GM10248 (cell line): ENCODE measurements at regions of chr19 and their contacts with region 1.

Region 1: DNA sequence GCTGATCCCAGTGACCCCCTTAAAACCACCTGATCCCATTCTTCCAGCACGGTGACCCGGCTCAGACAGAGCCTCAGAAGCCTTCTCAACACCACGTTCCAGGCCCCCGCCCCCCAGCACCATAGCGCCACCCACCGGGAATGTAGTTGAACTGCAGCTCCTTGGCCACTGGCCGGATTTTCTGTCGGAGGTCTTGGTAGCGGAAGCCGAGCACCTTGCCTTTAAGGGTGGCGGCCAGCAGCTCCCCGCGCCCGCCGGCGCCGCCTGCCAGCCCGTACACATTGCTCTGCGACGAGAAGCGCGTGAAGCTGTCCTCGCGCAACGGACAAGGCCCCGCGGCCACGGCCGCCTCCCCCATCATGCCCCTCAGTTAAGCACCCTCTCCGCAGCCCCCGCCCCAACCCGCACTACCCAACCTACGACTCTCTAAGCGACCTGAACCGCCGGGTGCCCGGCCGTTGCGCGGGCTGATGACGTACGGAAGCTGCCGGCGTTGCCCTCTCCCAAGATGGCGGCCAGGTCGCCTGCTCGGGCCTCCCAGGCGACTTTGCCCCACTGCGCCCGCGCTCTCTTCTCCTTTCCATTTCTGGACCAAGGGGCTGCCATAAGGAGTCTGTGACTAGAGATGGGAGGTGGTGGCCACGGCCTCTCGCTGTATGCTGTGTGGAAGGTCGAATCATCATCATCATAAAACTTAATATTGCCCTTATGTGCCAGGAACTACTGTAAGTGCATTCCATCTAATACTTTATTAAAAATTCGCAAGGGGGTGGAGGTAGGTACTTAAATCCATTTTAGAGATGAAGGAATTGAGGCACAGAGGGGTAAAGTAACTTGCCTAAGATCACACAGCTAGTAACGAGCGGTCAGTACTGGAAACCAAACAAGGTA is at the start of gene KPTN:
- DNase-seq: peak; percentile 96
- CTCF ChIP-seq: peak; percentile 97

Region 2: DNA sequence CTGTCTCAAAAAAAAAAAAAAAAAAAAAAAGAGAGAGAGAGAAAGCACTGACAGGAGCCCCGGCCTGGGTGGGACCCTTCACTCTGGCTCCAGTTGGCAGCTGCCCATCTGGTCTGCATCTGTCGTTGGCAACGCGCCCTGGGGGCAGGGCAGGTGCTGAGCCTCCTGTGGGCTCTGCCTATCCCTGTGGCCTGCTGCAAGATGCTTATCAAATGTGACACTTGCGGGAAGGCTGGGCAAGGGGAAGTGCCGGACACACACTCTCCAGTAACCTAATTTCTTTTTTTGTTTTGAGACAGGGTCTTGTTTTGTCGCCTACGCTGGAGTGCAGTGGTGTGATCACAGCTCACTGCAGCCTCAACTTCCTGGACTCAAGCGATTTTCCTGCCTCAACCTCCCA is 10.7 kb after region 1 on chr19:
- CTCF ChIA-PET with region 1: interaction called, 20 read pairs
- POLR2A ChIA-PET with region 1: interaction called, 3 read pairs
- DNase-seq: no peak
- CTCF ChIP-seq: no peak

Region 3: GRCh38 chr19:47507012-47507411 is 23.0 kb after region 1 on chr19:
- CTCF ChIA-PET with region 1: interaction called, 17 read pairs
- POLR2A ChIA-PET with region 1: interaction called, 12 read pairs
- DNase-seq: no peak
- CTCF ChIP-seq: no peak

Region 4: GRCh38 chr19:47514869-47515588 is 31.0 kb after region 1 on chr19 and contains the start of gene NAPA:
- CTCF ChIA-PET with region 1: interaction called, 21 read pairs
- POLR2A ChIA-PET with region 1: interaction called, 5 read pairs
- DNase-seq: peak; percentile 99
- CTCF ChIP-seq: no peak

Region 5: DNA sequence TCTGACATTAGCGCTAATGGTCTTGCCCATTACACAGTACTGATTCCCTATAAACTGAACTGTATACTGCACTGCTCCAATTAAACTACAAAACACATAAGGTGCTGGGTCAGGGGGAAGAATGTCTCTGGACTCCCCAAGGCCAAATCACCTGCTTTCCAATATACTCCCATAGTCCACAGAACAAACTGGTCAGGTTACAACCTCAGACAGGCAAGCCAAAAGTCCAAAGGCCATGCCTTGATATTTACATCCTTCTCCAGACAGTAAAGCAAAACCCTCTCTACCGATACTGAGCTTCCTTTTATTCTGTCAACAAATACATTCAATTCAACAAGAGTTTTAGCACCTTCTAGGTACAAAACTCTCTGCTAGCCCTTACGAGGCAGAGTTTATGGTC is 80.0 kb after region 1 on chr19:
- CTCF ChIA-PET with region 1: no interaction called
- POLR2A ChIA-PET with region 1: no interaction called
- DNase-seq: no peak
- CTCF ChIP-seq: no peak